Breast epithelium (tissue), 4 donors: ENCODE measurements at regions of chr11 and their contacts with region 1.

Region 1: GRCh38 chr11:59857444-59858434 is 8.5 kb downstream of the TCN1 start:
- DNase-seq: no peak
- H3K4me3 ChIP-seq: no peak overlapping the region
- H3K27ac ChIP-seq: no peak overlapping the region
- H3K4me1 ChIP-seq: no peaks in the 10 kb centered on the region
- H3K27me3 ChIP-seq: no peaks in the 10 kb centered on the region
- CTCF ChIP-seq: no peak
- POLR2A ChIP-seq: no peak

Region 2: GRCh38 chr11:60328460-60328859 is 470.7 kb after region 1 on chr11:
- intact Hi-C with region 1: loop called (anchors 10 kb)
- DNase-seq: no peak
- H3K4me3 ChIP-seq: no peak overlapping the region
- H3K27ac ChIP-seq: no peak overlapping the region
- H3K4me1 ChIP-seq: no peaks in the 10 kb centered on the region
- H3K27me3 ChIP-seq: no peaks in the 10 kb centered on the region
- CTCF ChIP-seq: no peak
- POLR2A ChIP-seq: no peak